Heart left ventricle (tissue), 16 donors: ENCODE measurements at regions of chr16 and their contacts with region 1.

Region 1: DNA sequence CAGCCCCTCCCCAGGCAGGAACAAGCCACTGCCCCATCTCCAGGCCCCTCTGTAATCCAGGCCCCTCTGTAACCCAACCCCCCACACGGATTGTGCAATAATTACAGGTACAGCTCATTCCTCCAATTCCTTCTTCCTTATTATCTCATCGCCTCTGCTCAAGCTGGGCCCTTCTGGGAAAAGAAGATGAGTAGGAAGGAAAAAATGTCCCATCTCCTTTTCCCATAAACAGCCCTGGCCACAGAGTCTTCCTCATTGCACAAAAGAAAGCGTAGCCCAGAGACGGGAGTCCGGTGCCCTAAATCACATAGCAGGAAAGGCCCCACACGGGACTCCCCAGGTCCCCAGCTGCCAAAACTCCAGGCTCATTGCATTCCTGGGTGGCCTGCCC is 3.6 kb upstream of the LITAFD start:
- DNase-seq: peak in 1 of 5 donors; percentile 35
- ATAC-seq: no peak
- H3K4me3 ChIP-seq: no peak overlapping the region
- H3K27ac ChIP-seq: no peak overlapping the region
- H3K4me1 ChIP-seq: peaks cover 0 to 4% (median 0%) of the 10 kb centered on the region in 12 donors
- H3K27me3 ChIP-seq: no peaks in the 10 kb centered on the region
- CTCF ChIP-seq: no peak
- POLR2A ChIP-seq: no peak

Region 2: DNA sequence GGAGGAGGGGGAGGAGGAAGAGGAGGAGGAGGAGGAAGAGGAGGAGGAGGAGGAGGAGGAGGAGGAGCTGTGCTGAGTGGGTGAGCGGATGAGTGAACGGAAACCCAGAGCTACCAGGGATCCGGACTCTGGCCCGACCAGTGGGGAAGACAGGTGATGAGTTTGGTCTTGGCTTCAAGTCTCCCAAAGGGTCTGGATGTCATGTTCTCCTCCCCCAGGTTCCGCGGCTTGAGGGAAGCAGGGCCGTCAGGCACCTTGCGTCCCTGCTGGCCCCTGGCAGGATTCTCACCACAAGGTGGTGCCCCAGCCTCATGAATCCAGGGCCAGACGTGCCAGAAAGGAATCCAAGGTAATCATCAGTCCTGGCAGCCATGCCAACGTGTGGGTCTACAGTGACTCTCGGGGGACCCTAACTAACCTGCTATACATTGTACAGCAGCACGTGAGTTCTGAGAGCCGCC is 217.6 kb before region 1 on chr16:
- intact Hi-C with region 1: loop called (anchors 1 to 5 kb)
- DNase-seq: peak in 4 of 5 donors; percentile 25 to 66 (median 45)
- ATAC-seq: peak in 3 of 4 donors; percentile 85 to 89 (median 87)
- H3K4me3 ChIP-seq: no peak overlapping the region
- H3K27ac ChIP-seq: no peak overlapping the region
- H3K4me1 ChIP-seq: no peaks in the 10 kb centered on the region
- H3K27me3 ChIP-seq: no peaks in the 10 kb centered on the region
- CTCF ChIP-seq: peak; percentile 38 to 69 (median 59)
- POLR2A ChIP-seq: no peak